Ascending aorta (tissue), 2 donors: ENCODE measurements at regions of chr6 and their contacts with region 1.

Region 1: GRCh38 chr6:39843305-39844020 is 51.3 kb downstream of the DAAM2 start:
- DNase-seq: no peak
- H3K4me3 ChIP-seq: peak overlapping the region in 1 of 2 donors; percentile 5
- H3K27ac ChIP-seq: peak overlapping the region; percentile 67
- H3K4me1 ChIP-seq: peaks cover 15 to 44% of the 10 kb centered on the region in 2 donors
- H3K27me3 ChIP-seq: no peaks in the 10 kb centered on the region
- CTCF ChIP-seq: peak in 2 of 3 experiments; percentile 25 to 43

Region 2: DNA sequence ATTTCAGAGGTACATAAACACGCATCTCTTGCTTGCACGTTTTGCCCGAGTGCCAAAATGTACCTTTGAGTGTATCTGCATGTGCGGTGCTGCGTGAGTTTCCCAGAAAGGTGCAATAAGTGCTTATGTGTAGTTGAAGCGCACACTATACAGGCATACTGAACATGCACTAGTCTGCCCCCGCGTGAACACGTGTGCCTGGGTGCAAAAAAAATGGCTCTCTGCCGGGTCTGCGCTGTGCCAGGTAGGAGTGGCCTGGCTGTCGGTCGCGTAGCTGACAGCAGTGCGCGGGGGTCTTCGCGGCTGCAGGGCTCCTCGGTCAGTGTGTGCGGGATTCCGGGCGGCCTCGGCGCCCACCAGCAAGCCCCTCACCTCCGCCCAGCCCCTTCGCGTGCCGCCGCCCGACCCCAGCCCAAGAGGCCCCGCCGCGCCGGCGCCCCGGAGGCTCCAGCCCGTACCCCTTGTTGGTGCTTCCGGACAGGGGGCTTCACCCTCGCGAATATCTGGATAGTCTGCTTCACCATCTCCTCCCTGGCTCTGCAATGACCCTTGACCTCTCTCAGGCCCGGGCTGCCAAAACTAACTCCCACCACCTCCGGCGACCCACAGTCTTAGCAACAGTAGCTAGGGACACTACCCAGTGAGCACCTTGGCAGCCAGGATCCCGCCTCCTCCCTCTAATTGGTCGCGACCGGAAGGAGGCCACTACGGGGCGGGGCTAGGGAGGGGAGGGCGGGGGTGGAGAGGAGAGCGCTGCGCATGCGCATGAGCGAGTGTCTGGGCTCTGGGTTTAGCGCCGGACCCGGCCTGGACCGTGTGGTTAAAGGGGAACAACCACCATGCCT is 118.5 kb before region 1 on chr6 and contains the start of gene KIF6:
- intact Hi-C with region 1: loop called (anchors 10 kb)
- DNase-seq: peak; percentile 64 to 95
- H3K4me3 ChIP-seq: peak within 1 kb of the TSS; percentile 56 to 95
- H3K27ac ChIP-seq: peak within 1 kb of the TSS in 1 of 2 donors; percentile 27
- H3K4me1 ChIP-seq: peaks cover 0 to 4% of the 10 kb centered on the region in 2 donors
- H3K27me3 ChIP-seq: no peaks in the 10 kb centered on the region
- CTCF ChIP-seq: no peak
- total RNA-seq, gene KIF6: 0.43 TPM

Region 3: GRCh38 chr6:39821742-39822532 is 21.5 kb before region 1 on chr6:
- intact Hi-C with region 1: loop called (anchors 2 kb)
- DNase-seq: no peak
- H3K4me3 ChIP-seq: peak overlapping the region; percentile 35 to 57
- H3K27ac ChIP-seq: peak overlapping the region; percentile 70 to 77
- H3K4me1 ChIP-seq: peaks cover 35 to 74% of the 10 kb centered on the region in 2 donors
- H3K27me3 ChIP-seq: no peaks in the 10 kb centered on the region
- CTCF ChIP-seq: no peak